ENCODE measurements at regions of chr13 and their contacts with region 1.

Region 1: GRCh38 chr13:109576309-109576813 is 210.0 kb downstream of the IRS2 start:
- DNase-seq: no peak

Region 2: DNA sequence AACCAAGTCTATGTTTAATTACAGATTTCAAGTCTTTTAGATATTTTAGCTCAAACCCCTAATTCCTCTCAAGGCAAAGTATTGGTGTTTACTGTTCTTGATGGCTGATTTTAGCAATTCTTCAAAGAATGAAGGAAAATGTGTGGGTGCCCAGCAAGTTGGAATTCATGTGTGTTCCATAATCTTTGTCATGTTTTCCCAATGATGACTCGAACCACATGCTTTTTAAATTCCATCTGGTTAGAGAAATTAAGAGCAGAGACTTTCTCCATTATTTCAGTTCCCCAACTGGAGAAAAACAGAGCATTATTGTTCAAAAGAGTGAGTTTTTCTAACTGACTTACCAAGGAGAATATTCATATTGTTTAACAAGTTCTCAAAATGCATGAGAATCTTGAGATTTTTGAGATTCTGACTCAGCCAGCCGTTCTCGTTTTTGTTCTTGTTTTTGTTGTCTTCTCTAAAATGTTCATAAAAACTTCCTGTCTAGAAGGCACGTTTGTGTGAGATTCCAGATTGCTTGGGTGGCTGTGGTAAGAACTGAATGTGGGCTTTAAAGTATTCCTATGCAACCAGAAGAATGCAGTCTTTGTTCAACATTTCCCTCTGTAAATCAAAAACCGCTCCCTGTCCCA is 194.7 kb before region 1 on chr13:
- intact Hi-C with region 1: no loop called
- DNase-seq: no peak

Region 3: GRCh38 chr13:109610517-109610916 is 34.2 kb after region 1 on chr13:
- intact Hi-C with region 1: no loop called
- DNase-seq: no peak

Region 4: GRCh38 chr13:109622006-109622405 is 45.6 kb after region 1 on chr13:
- intact Hi-C with region 1: loop called in 1 of 2 experiments (anchors 1 kb)
- DNase-seq: no peak

Region 5: DNA sequence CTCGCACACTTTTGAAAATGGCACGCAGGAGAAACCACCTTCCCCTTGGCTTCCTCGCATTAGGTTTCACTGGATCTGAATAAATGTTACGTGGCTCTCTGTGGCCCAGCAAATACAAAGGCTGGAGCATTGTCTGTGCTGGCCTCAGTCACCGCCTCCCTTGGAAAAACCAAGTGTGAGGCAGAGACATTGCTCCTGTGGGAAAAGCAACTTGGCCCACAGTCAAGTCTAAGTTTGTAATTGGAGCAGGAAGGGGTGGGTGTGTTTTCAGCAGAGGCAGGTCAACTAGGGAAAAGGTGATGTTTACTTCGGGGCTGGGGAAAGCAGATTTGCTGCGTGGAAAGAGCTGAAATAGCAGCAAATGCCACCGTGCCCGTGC is 108.5 kb after region 1 on chr13:
- intact Hi-C with region 1: no loop called
- DNase-seq: no peak